ENCODE measurements at regions of chr1 and their contacts with region 1.

Region 1: DNA sequence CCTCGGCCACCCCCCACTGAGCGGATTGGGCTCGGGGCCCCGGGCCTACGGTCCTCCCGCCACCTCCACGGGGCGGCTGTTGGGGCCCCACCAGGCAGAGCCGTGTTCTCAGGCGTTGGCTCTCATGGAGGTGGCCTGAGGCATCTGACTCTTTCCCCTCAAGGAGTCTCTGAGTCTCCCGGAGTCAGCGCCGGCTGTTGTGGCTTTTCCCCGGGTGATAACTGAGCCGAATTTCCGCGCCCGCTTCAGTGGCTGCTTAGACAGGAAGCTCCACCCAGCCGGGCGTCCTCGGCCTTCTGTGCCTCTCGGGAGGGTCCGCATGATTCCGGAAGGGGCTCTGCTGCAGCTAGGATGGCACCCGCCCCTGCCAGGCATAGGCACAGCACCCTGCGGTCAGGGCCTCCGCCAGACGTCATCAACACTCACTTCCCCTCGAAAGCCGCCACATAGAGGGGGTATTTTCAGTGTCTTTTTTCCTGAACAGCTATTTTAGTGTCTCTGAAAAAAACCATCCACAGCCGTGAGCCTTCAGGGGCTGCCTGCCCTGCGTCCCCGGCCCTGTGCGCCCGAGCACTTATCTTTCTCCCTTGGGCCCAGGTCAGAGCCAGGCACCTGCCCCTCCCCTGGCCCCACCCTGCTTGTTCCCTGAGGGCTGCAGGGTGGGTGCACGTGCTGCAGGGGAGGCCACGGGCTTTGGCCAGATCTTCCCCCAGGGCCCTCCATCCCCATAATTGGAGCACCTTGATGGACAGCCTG is 72.9 kb downstream of the SKI start:
- DNase-seq: peak; percentile 96 to 99 (median 97)
- H3K4me3 ChIP-seq: peak overlapping the region; percentile 47 to 57
- H3K4me3 Mint-ChIP-seq: peak overlapping the region; percentile 77 to 92 (median 86)
- H3K27ac ChIP-seq: peak overlapping the region; percentile 96
- H3K27ac Mint-ChIP-seq: peak overlapping the region; percentile 99 to 100 (median 99)
- H3K4me1 ChIP-seq: peaks cover 67% of the 10 kb centered on the region
- H3K4me1 Mint-ChIP-seq: peaks cover 15 to 71% (median 46%) of the 10 kb centered on the region in 4 donors
- H3K27me3 ChIP-seq: no peaks in the 10 kb centered on the region
- H3K27me3 Mint-ChIP-seq: no peaks in the 10 kb centered on the region

Region 2: GRCh38 chr1:1387098-1388077 is 913.6 kb before region 1 on chr1:
- CTCF ChIA-PET with region 1: no interaction called
- POLR2A ChIA-PET with region 1: no interaction called
- intact Hi-C with region 1: no loop called
- DNase-seq: no peak
- H3K4me3 ChIP-seq: no peak overlapping the region
- H3K4me3 Mint-ChIP-seq: no peak overlapping the region
- H3K27ac ChIP-seq: no peak overlapping the region
- H3K27ac Mint-ChIP-seq: no peak overlapping the region
- H3K4me1 ChIP-seq: no peaks in the 10 kb centered on the region
- H3K4me1 Mint-ChIP-seq: peaks cover 0 to 3% (median under 1%) of the 10 kb centered on the region in 4 donors
- H3K27me3 ChIP-seq: no peaks in the 10 kb centered on the region
- H3K27me3 Mint-ChIP-seq: no peaks in the 10 kb centered on the region

Region 3: GRCh38 chr1:1479547-1480487 is 821.2 kb before region 1 on chr1:
- CTCF ChIA-PET with region 1: no interaction called
- POLR2A ChIA-PET with region 1: no interaction called
- intact Hi-C with region 1: no loop called
- DNase-seq: no peak
- H3K4me3 ChIP-seq: no peak overlapping the region
- H3K4me3 Mint-ChIP-seq: peak overlapping the region in 2 of 8 donors; percentile 46 to 64
- H3K27ac ChIP-seq: no peak overlapping the region
- H3K27ac Mint-ChIP-seq: peak overlapping the region in 3 of 7 donors; percentile 38 to 80 (median 41)
- H3K4me1 ChIP-seq: no peaks in the 10 kb centered on the region
- H3K4me1 Mint-ChIP-seq: peaks cover 0 to 7% (median under 1%) of the 10 kb centered on the region in 4 donors
- H3K27me3 ChIP-seq: no peaks in the 10 kb centered on the region
- H3K27me3 Mint-ChIP-seq: no peaks in the 10 kb centered on the region

Region 4: GRCh38 chr1:2205191-2205952 is 95.7 kb before region 1 on chr1:
- CTCF ChIA-PET with region 1: interaction called, 3 read pairs
- POLR2A ChIA-PET with region 1: interaction called, 3 read pairs
- intact Hi-C with region 1: loop called (anchors 2 kb)
- DNase-seq: peak; percentile 90 to 95 (median 91)
- H3K4me3 ChIP-seq: peak overlapping the region; percentile 6 to 47
- H3K4me3 Mint-ChIP-seq: peak overlapping the region; percentile 48 to 71 (median 68)
- H3K27ac ChIP-seq: peak overlapping the region; percentile 38
- H3K27ac Mint-ChIP-seq: peak overlapping the region in 3 of 7 donors; percentile 35 to 79 (median 62)
- H3K4me1 ChIP-seq: peaks cover 26% of the 10 kb centered on the region
- H3K4me1 Mint-ChIP-seq: peaks cover 0 to 15% (median 3%) of the 10 kb centered on the region in 4 donors
- H3K27me3 ChIP-seq: no peaks in the 10 kb centered on the region
- H3K27me3 Mint-ChIP-seq: no peaks in the 10 kb centered on the region

Region 5: GRCh38 chr1:2233997-2234761 is 66.8 kb before region 1 on chr1:
- CTCF ChIA-PET with region 1: interaction called, 4 read pairs
- POLR2A ChIA-PET with region 1: interaction called, 111 read pairs
- intact Hi-C with region 1: loop called (anchors 1 kb)
- DNase-seq: peak; percentile 78 to 93 (median 80)
- H3K4me3 ChIP-seq: peak overlapping the region; percentile 90 to 97
- H3K4me3 Mint-ChIP-seq: peak overlapping the region; percentile 92 to 99 (median 96)
- H3K27ac ChIP-seq: peak overlapping the region; percentile 84
- H3K27ac Mint-ChIP-seq: peak overlapping the region; percentile 94 to 100 (median 99)
- H3K4me1 ChIP-seq: peaks cover 81% of the 10 kb centered on the region
- H3K4me1 Mint-ChIP-seq: peaks cover 45 to 81% (median 61%) of the 10 kb centered on the region in 4 donors
- H3K27me3 ChIP-seq: no peaks in the 10 kb centered on the region
- H3K27me3 Mint-ChIP-seq: peaks cover 0 to 4% of the 10 kb centered on the region in 2 donors

Region 6: DNA sequence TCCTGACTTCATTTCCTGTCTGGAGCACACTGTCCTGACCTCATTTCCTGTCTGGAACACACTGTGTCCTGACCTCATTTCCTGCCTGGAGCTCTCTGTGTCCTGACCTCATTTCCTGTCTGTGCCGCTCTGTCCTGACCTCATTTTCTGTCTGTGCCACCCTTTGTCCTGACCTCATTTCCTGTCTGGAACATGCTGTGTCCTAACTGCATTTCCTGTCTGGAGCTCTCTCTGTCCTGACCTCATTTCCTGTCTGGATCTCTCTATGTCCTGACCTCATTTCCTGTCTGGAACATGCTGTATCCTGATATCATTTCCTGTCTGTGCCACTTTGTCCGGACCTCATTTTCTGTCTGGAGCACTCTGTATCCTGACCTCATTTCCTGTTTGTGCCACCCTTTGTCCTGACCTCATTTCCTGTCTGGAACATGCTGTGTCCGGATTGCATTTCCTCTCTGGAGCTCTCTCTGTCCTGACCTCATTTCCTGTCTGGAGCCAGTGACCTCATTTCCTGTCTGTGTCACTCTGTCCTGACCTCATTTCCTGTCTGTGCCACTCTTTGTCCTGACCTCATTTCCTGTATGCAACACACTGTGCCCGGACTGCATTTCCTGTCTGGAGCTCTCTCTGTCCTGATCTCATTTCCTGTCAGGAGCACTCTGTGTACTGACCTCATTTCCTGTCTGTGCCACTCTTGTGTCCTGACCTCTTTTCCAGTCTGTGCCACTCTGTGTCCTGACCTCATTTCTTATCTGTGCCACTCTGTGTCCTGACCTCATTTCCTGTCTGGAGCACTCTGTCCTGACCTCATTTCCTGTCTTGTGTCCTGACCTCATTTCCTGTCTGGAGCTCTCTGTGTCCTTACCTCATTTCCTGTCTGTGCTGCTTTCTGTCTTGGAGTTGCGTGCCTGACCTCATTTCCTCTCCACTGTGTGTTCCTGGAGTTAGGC is 45.3 kb before region 1 on chr1:
- CTCF ChIA-PET with region 1: no interaction called
- POLR2A ChIA-PET with region 1: interaction called, 60 read pairs
- intact Hi-C with region 1: loop called (anchors 1 kb)
- DNase-seq: peak; percentile 87 to 96 (median 92)
- H3K4me3 ChIP-seq: no peak overlapping the region
- H3K4me3 Mint-ChIP-seq: no peak overlapping the region
- H3K27ac ChIP-seq: peak overlapping the region; percentile 95
- H3K27ac Mint-ChIP-seq: no peak overlapping the region
- H3K4me1 ChIP-seq: peaks cover 87% of the 10 kb centered on the region
- H3K4me1 Mint-ChIP-seq: peaks cover 31 to 59% (median 40%) of the 10 kb centered on the region in 4 donors
- H3K27me3 ChIP-seq: no peaks in the 10 kb centered on the region
- H3K27me3 Mint-ChIP-seq: no peaks in the 10 kb centered on the region

Region 7: DNA sequence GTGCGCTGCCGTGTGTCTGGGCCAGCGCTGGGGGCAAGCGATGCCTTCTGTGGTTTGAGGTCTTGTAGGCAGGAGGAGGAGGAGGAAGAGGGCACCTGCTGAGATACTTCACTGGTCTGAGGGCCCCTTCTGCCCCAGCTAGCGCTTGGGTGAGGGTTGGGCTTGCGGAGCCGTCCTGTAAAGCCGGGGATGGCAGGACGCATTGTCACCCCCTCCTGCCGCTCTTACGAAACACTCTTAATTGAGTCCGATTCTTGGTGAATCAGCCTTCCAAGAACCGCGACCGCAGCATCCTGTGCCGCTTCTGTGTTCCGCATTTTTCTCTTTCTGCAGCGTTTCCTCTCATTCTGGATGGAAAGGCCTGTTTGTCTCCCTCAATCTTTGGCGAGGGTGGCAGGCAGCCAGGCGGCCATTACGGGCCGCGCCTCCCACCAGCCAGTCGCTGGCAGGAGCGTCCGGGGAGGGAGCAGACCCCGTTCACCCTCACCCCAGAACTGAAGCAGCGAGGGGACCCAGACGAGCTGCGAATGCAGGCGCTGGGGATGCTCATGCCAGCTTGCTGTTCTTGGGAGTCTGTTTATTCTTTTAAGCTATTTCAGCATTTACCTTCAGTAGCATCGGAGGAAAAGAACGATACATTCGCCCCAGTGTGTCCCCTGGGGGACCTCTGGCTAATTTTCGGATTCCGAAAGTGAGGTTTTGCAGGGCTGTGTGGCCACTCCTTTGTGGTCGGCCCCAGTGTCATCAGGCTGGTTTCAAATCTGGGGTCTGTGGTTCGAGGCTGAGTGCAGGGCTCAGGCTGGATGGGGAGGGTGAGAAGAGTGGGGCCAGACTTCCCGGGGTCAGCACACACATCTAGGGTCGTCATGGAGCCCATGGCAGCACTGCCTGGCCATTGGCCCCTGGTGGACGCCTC is 10.2 kb before region 1 on chr1:
- CTCF ChIA-PET with region 1: no interaction called
- POLR2A ChIA-PET with region 1: interaction called, 37 read pairs
- intact Hi-C with region 1: loop called (anchors 1 kb)
- DNase-seq: peak; percentile 73 to 91 (median 79)
- H3K4me3 ChIP-seq: peak overlapping the region; percentile 32 to 69
- H3K4me3 Mint-ChIP-seq: peak overlapping the region; percentile 86 to 95 (median 88)
- H3K27ac ChIP-seq: peak overlapping the region; percentile 73
- H3K27ac Mint-ChIP-seq: peak overlapping the region; percentile 92 to 99 (median 98)
- H3K4me1 ChIP-seq: peaks cover 91% of the 10 kb centered on the region
- H3K4me1 Mint-ChIP-seq: peaks cover 39 to 97% (median 78%) of the 10 kb centered on the region in 4 donors
- H3K27me3 ChIP-seq: no peaks in the 10 kb centered on the region
- H3K27me3 Mint-ChIP-seq: no peaks in the 10 kb centered on the region

Region 8: DNA sequence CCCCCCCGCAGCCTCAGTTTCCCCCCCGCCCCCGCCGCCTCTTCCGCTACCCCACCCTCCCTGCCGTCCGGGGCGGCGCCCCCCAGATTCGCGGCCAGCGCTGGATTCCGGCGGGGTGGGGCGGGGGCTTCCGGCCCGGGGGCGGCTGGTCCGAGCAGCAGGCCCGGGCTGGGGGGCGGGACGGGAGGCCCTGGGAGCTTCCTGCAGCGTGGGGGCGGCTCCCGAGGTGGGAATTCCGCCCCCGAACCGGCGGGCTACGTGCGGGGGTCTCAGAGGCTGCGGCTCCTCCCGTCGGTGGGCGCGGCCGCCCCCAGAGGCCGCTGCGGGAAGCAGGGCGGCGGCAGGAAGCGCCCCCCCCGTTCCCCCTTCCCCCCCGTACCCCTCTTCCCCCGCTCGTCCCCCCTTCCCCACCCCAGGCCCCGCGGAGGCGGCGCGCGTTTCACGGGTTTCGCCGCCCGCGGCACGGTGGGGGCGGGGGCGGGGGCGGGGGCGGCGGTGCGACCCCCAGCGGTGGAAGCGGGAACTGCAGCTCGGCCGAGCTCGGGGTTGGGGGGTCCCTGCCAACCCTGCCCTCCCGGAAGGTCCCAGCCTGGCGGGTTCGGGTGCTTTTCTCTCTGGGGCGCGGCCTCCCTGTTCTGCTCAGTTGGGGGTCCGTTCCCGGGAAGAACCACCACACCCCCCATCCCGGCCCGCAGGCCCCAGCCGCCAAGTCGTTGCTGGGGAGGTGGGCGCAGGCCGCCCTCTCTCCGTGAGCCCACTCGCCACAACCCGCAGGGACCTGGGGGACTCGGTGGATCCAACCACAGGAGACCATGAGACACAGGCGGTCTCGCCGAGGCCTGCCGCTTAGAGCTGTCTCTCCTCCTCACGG is 14.0 kb after region 1 on chr1:
- CTCF ChIA-PET with region 1: interaction called, 7 read pairs
- POLR2A ChIA-PET with region 1: interaction called, 44 read pairs
- intact Hi-C with region 1: loop called (anchors 1 kb)
- DNase-seq: peak; percentile 65 to 71 (median 67)
- H3K4me3 ChIP-seq: no peak overlapping the region
- H3K4me3 Mint-ChIP-seq: peak overlapping the region in 6 of 8 donors; percentile 21 to 70 (median 55)
- H3K27ac ChIP-seq: peak overlapping the region; percentile 63
- H3K27ac Mint-ChIP-seq: peak overlapping the region in 5 of 7 donors; percentile 36 to 79 (median 74)
- H3K4me1 ChIP-seq: peaks cover 42% of the 10 kb centered on the region
- H3K4me1 Mint-ChIP-seq: peaks cover 2 to 9% (median 4%) of the 10 kb centered on the region in 4 donors
- H3K27me3 ChIP-seq: no peaks in the 10 kb centered on the region
- H3K27me3 Mint-ChIP-seq: no peaks in the 10 kb centered on the region

Region 9: GRCh38 chr1:2480986-2481364 is 179.9 kb after region 1 on chr1:
- CTCF ChIA-PET with region 1: no interaction called
- POLR2A ChIA-PET with region 1: no interaction called
- intact Hi-C with region 1: no loop called
- DNase-seq: no peak
- H3K4me3 ChIP-seq: no peak overlapping the region
- H3K4me3 Mint-ChIP-seq: no peak overlapping the region
- H3K27ac ChIP-seq: no peak overlapping the region
- H3K27ac Mint-ChIP-seq: peak overlapping the region in 1 of 7 donors; percentile 61
- H3K4me1 ChIP-seq: no peaks in the 10 kb centered on the region
- H3K4me1 Mint-ChIP-seq: peaks cover 2 to 5% (median 4%) of the 10 kb centered on the region in 4 donors
- H3K27me3 ChIP-seq: no peaks in the 10 kb centered on the region
- H3K27me3 Mint-ChIP-seq: no peaks in the 10 kb centered on the region